Naive thymus-derived CD4-positive, alpha-beta T cell (primary cell): ENCODE measurements at regions of chr20 and their contacts with region 1.

Region 1: GRCh38 chr20:31454365-31454764 is 13.9 kb downstream of the DEFB123 start:
- DNase-seq: no peak
- ATAC-seq: no peak
- H3K4me3 ChIP-seq: no peak overlapping the region
- H3K4me3 Mint-ChIP-seq: no peak overlapping the region
- H3K27ac ChIP-seq: no peak overlapping the region
- H3K27ac Mint-ChIP-seq: no peak overlapping the region
- H3K4me1 ChIP-seq: no peaks in the 10 kb centered on the region
- H3K4me1 Mint-ChIP-seq: no peaks in the 10 kb centered on the region
- H3K27me3 ChIP-seq: no peaks in the 10 kb centered on the region
- H3K27me3 Mint-ChIP-seq: peaks cover 5 to 40% (median 22%) of the 10 kb centered on the region in 5 donors

Region 2: DNA sequence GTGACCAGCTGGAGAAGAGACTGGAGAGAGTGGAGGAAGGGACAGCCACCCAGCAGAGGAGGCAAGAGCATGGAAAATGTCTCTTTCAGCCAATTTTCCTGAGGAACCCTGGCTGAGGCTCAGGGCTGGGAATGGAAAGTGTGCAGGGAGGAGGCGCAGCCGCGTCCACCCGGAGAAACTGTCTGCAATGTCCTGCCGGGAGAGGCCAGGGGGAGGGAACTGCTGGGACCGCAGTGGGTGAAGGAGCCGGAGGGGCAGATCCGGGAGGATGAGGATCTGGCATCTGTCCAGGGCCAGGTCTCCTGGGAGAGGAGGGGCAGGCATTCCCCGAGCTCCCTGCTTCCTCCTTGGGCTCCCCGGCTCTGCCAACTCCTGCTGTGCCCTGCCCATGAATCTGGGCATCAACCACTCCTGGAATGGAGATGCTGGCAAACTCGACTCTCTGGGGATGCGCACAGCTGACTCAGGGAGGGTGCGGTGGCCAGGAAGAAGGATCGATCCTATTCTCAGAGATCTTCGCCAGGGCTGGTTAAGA is 42.5 kb after region 1 on chr20:
- CTCF ChIA-PET with region 1: interaction called, 39 read pairs
- POLR2A ChIA-PET with region 1: no interaction called
- intact Hi-C with region 1: no loop called
- DNase-seq: no peak
- ATAC-seq: no peak
- H3K4me3 ChIP-seq: no peak overlapping the region
- H3K4me3 Mint-ChIP-seq: no peak overlapping the region
- H3K27ac ChIP-seq: no peak overlapping the region
- H3K27ac Mint-ChIP-seq: no peak overlapping the region
- H3K4me1 ChIP-seq: no peaks in the 10 kb centered on the region
- H3K4me1 Mint-ChIP-seq: peaks cover 0 to 5% (median 0%) of the 10 kb centered on the region in 7 donors
- H3K27me3 ChIP-seq: peaks cover 0 to 4% of the 10 kb centered on the region in 2 donors
- H3K27me3 Mint-ChIP-seq: peaks cover 10 to 24% (median 18%) of the 10 kb centered on the region in 5 donors

Region 3: DNA sequence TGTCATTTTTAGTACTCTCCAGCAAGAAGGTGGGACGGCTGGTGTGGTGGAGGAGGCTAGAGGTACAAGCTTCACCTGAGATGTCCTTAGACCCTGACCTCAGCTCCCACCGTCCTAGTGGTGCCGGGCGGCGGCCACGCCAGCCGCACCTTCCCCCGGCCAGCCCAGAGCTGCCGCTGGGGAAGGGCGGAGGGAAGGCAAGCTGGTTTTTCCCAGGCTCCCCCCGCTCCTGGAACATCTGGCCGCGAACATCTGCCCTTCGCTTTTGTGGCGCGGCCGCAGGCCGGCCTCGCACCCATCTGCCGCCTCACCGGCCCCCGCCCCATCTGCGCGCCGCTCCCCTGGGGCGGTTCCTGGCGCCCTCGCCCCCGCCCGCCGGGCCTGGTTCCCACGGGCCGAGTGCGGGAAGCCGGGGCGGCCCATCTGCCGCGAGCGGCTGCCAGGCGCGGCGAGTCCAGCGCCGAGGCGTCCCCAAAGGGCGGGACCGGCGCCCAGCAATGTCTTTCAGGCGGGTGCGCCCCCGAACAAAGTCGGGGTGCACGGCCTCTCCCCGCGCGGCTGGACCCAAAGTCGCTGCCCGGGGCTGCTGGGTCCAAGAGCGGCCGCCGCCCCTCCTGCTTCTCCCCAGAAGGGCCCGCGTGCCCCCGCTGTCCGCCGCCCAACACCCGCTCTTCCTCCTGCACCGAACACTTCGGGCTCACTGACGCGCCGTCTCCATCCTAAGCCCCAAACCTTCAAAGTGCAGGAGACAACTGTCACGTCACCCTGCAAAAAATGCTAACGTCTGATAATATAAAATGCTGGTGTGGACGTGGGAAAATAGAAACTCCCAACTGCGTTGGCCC is 133.4 kb after region 1 on chr20:
- CTCF ChIA-PET with region 1: no interaction called
- POLR2A ChIA-PET with region 1: no interaction called
- intact Hi-C with region 1: no loop called
- DNase-seq: peak in 1 of 9 donors; percentile 52
- ATAC-seq: peak; percentile 56
- H3K4me3 ChIP-seq: peak overlapping the region; percentile 9
- H3K4me3 Mint-ChIP-seq: peak overlapping the region; percentile 74 to 95 (median 84)
- H3K27ac ChIP-seq: no peak overlapping the region
- H3K27ac Mint-ChIP-seq: peak overlapping the region in 1 of 9 donors; percentile 78
- H3K4me1 ChIP-seq: peaks cover 0 to 6% of the 10 kb centered on the region in 2 donors
- H3K4me1 Mint-ChIP-seq: peaks cover 5 to 8% (median 6%) of the 10 kb centered on the region in 7 donors
- H3K27me3 ChIP-seq: peaks cover 4 to 6% of the 10 kb centered on the region in 2 donors
- H3K27me3 Mint-ChIP-seq: peaks cover 12 to 37% (median 22%) of the 10 kb centered on the region in 5 donors